ENCODE measurements at regions of chr15 and their contacts with region 1.

Region 1: DNA sequence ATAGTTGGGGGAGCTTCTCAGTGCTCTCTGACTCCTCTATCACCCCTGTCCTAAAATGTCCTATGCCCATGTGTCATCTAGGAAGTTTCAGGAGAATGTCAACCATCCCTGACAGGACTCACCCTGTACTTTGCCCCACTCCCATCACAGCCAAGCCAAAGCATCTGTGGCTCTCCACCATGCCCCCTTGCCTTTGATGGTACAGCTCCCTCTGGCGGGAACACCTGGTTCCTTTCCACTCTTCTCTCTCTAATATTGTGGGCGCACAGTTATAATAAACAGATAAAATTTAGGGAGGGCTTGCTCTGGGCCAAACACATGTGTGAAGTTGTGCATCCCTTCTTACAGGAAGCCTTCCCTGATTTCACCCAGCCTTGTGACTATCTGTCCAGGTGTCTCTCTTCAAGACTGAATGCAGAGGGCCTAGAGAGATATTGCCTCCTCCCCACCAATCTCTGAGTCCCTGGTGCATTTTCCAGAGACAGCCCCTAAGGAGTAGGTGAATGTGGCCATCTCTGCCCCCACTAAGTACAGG is 62.8 kb downstream of the ISG20 start:
- DNase-seq: peak; percentile 60
- H3K4me3 ChIP-seq: no peak overlapping the region
- H3K27ac ChIP-seq: no peak overlapping the region
- H3K4me1 ChIP-seq: no peaks in the 10 kb centered on the region
- CTCF ChIP-seq: peak; percentile 82

Region 2: GRCh38 chr15:88476635-88477060 is 225.0 kb before region 1 on chr15:
- CTCF ChIA-PET with region 1: no interaction called
- POLR2A ChIA-PET with region 1: no interaction called
- intact Hi-C with region 1: loop called (anchors 2 kb)
- DNase-seq: peak; percentile 63
- H3K4me3 ChIP-seq: no peak overlapping the region
- H3K27ac ChIP-seq: no peak overlapping the region
- H3K4me1 ChIP-seq: peaks cover 6% of the 10 kb centered on the region
- CTCF ChIP-seq: peak; percentile 82

Region 3: GRCh38 chr15:88638626-88639372 is 62.8 kb before region 1 on chr15 and contains the start of gene ISG20:
- CTCF ChIA-PET with region 1: no interaction called
- POLR2A ChIA-PET with region 1: no interaction called
- intact Hi-C with region 1: loop called (anchors 1 kb)
- DNase-seq: peak; percentile 97
- H3K4me3 ChIP-seq: peak within 1 kb of the TSS; percentile 81
- H3K27ac ChIP-seq: peak within 1 kb of the TSS; percentile 97
- H3K4me1 ChIP-seq: peaks cover 89% of the 10 kb centered on the region
- CTCF ChIP-seq: peak; percentile 60
- total RNA-seq, gene ISG20: 345 and 502 TPM in 2 replicates